WTC11 (cell line): ENCODE measurements at regions of chr2 and their contacts with region 1.

Region 1: DNA sequence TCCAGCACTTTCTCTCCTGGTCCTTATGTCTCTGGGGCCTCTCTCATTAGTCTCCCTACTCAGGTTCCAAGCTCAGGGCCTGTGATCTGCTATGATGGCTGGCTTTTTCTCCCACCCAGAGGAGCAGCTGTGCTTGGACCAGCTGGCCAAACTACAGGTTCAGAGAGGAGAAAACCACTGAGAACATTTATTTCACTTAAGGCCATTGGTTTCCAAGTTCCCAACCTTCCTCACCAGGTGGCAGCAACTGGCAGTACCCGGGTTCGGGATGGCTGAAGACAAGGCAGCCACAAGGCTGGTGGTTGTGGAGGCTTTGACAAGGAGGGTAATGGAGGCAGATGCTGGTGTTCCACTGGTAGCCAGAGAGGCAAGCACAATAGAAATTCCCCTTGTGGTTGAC is 29.9 kb upstream of the SELENOI start:
- DNase-seq: no peak
- ATAC-seq: peak; percentile 6; the same call in 1 of the 2 replicates
- H3K4me3 Mint-ChIP-seq: no peak overlapping the region
- H3K27ac Mint-ChIP-seq: peak overlapping the region; percentile 60; the same call in 1 of the 2 replicates
- H3K4me1 Mint-ChIP-seq: peaks cover 37% of the 10 kb centered on the region
- H3K27me3 Mint-ChIP-seq: no peaks in the 10 kb centered on the region
- CTCF ChIP-seq: no peak

Region 2: DNA sequence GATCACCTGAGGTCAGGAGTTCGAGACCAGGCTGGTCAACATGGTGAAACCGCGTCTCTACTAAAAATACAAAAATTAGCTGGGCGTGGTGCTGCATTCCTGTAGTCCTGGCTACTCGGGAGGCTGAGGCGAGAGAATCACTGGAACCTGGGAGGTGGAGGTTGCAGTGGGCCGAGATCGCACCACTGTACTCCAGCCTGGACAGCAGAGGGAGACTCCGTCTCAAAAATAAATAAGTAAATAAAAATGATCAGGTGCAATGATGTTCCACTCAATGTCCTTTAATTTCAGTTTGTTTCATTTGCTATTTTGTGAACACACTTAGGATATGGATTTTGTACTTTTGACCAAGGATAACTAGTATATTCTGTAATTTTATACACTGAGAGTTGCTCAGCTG is 81.0 kb before region 1 on chr2:
- CTCF ChIA-PET with region 1: interaction called, 12 read pairs
- POLR2A ChIA-PET with region 1: no interaction called
- DNase-seq: no peak
- ATAC-seq: no peak
- H3K4me3 Mint-ChIP-seq: no peak overlapping the region
- H3K27ac Mint-ChIP-seq: no peak overlapping the region
- H3K4me1 Mint-ChIP-seq: no peaks in the 10 kb centered on the region
- H3K27me3 Mint-ChIP-seq: no peaks in the 10 kb centered on the region
- CTCF ChIP-seq: no peak

Region 3: GRCh38 chr2:26244309-26245121 is 71.5 kb before region 1 on chr2 and contains the starts of genes HADHA and HADHB:
- CTCF ChIA-PET with region 1: interaction called, 33 read pairs
- POLR2A ChIA-PET with region 1: no interaction called
- DNase-seq: peak; percentile 93
- ATAC-seq: peak; percentile 91
- H3K4me3 Mint-ChIP-seq: peak within 1 kb of the TSS; percentile 100
- H3K27ac Mint-ChIP-seq: peak within 1 kb of the TSS; percentile 96
- H3K4me1 Mint-ChIP-seq: peaks cover 35% of the 10 kb centered on the region
- H3K27me3 Mint-ChIP-seq: no peaks in the 10 kb centered on the region
- CTCF ChIP-seq: no peak
- total RNA-seq, gene HADHA: 118 to 123 TPM (median 121 TPM) in 3 replicates
- total RNA-seq, gene HADHB: 59.8 to 64.5 TPM (median 60.7 TPM) in 3 replicates

Region 4: DNA sequence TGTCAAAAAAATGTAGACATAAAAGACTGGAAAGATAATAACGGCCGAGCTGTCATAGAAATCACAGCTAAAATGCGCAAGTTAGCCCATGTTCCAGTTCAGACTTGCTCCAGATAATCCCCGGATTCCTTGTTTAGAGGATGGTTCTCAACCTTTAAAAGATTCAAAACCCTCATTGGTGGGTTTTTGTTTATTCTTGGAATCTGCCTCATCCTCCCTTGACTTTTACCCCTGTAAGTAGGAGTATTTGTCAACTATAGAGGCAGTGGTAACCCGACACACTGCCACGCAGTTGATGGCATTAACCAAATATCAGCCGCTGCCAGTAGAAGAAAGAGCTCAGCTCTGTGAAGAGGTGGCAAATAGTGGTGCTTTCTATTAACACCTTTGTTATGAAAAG is 10.5 kb before region 1 on chr2:
- CTCF ChIA-PET with region 1: interaction called, 14 read pairs
- POLR2A ChIA-PET with region 1: interaction called, 7 read pairs
- DNase-seq: no peak
- ATAC-seq: peak; percentile 34; the same call in 1 of the 2 replicates
- H3K4me3 Mint-ChIP-seq: no peak overlapping the region
- H3K27ac Mint-ChIP-seq: no peak overlapping the region
- H3K4me1 Mint-ChIP-seq: peaks cover 12% of the 10 kb centered on the region
- H3K27me3 Mint-ChIP-seq: no peaks in the 10 kb centered on the region
- CTCF ChIP-seq: no peak